WTC11 (cell line): ENCODE measurements at regions of chr4 and their contacts with region 1.

Region 1: DNA sequence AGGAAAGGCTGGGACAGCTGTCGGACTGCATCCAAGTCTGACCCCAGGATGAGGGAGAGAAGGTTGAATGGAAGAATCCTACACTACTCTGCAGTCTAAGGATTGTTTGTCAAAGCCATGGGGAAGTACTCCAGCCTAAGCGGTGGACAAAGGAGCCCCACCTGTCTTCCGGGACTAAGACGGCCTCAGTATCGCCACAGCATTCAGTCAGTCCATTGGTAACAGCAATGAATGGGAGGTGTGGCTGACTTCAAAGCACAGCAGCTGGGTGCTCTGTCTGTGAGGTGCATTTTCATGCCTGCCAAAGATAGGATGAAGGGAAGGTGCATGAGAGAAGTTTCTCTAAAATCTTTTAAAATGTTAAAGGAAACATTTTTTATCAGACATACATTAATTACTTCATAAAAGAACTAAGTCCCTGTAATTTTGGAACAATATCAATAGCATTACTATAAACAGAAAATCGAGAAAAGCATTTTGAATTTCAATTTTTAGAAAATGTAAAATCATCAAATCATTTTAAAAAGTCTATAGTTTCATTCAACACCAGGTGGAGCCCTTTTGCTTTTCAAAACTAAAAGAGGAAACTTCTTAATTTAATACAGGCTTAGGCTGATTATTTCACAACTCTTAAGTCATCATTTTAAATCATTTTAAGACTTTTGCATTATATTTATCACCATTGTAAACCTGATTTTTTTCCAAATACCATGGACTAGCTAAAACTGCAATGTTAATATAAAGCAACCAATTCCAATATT is 27.6 kb upstream of the INTU start:
- DNase-seq: peak; percentile 69
- ATAC-seq: peak; percentile 99
- H3K4me3 Mint-ChIP-seq: peak overlapping the region; percentile 53
- H3K27ac Mint-ChIP-seq: peak overlapping the region; percentile 96
- H3K4me1 Mint-ChIP-seq: peaks cover 38% of the 10 kb centered on the region
- H3K27me3 Mint-ChIP-seq: no peaks in the 10 kb centered on the region
- CTCF ChIP-seq: no peak

Region 2: GRCh38 chr4:127622921-127623656 is 18.0 kb after region 1 on chr4:
- CTCF ChIA-PET with region 1: interaction called, 10 read pairs
- POLR2A ChIA-PET with region 1: no interaction called
- DNase-seq: peak; percentile 83
- ATAC-seq: peak; percentile 96
- H3K4me3 Mint-ChIP-seq: peak overlapping the region; percentile 81
- H3K27ac Mint-ChIP-seq: no peak overlapping the region
- H3K4me1 Mint-ChIP-seq: peaks cover 11% of the 10 kb centered on the region
- H3K27me3 Mint-ChIP-seq: peaks cover 43% of the 10 kb centered on the region
- CTCF ChIP-seq: no peak

Region 3: GRCh38 chr4:127732613-127733328 is 127.6 kb after region 1 on chr4:
- CTCF ChIA-PET with region 1: interaction called, 23 read pairs
- POLR2A ChIA-PET with region 1: no interaction called
- DNase-seq: no peak
- ATAC-seq: peak; percentile 92
- H3K4me3 Mint-ChIP-seq: no peak overlapping the region
- H3K27ac Mint-ChIP-seq: no peak overlapping the region
- H3K4me1 Mint-ChIP-seq: peaks cover 3% of the 10 kb centered on the region; the same call in 1 of the 2 replicates
- H3K27me3 Mint-ChIP-seq: no peaks in the 10 kb centered on the region
- CTCF ChIP-seq: peak; percentile 21; the same call in 1 of the 2 replicates